Ascending aorta (tissue), 2 donors: ENCODE measurements at regions of chr3 and their contacts with region 1.

Region 1: DNA sequence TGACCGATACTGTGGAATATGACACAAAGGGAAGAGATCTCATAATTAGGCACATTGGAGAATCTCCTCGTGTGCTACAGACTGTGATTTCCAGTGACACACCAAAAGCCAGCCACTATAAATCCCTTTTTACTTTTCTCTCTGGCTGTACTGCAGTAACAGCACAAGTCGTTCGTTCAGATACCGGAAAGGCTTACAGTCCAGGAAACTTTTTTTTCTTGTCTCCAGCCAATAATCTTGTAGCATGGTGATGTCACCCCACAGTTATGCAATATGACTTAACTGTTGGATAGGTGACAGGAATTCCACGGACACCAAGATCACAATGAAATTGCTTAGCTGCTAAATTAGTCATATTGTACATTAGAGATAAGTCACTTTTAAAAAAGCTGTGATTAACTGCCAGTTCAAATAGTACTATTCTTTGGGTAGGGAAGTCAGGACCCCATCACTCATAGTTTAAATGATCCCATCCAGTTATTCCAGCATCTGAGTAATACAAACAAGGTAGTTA is 36.3 kb upstream of the TSC22D2 start:
- DNase-seq: peak in 1 of 2 donors; percentile 89
- H3K4me3 ChIP-seq: peak overlapping the region; percentile 34 to 49
- H3K27ac ChIP-seq: peak overlapping the region; percentile 72 to 83
- H3K4me1 ChIP-seq: peaks cover 0 to 11% of the 10 kb centered on the region in 2 donors
- H3K27me3 ChIP-seq: no peaks in the 10 kb centered on the region
- CTCF ChIP-seq: no peak

Region 2: GRCh38 chr3:150238998-150239619 is 132.7 kb before region 1 on chr3:
- intact Hi-C with region 1: loop called (anchors 5 kb)
- DNase-seq: no peak
- H3K4me3 ChIP-seq: no peak overlapping the region
- H3K27ac ChIP-seq: peak overlapping the region; percentile 87
- H3K4me1 ChIP-seq: peaks cover 2 to 34% of the 10 kb centered on the region in 2 donors
- H3K27me3 ChIP-seq: no peaks in the 10 kb centered on the region
- CTCF ChIP-seq: peak in 1 of 3 experiments; percentile 14

Region 3: GRCh38 chr3:150253622-150254021 is 118.2 kb before region 1 on chr3:
- intact Hi-C with region 1: loop called (anchors 2 kb)
- DNase-seq: peak in 1 of 2 donors; percentile 69
- H3K4me3 ChIP-seq: no peak overlapping the region
- H3K27ac ChIP-seq: peak overlapping the region; percentile 62 to 92
- H3K4me1 ChIP-seq: peaks cover 16 to 40% of the 10 kb centered on the region in 2 donors
- H3K27me3 ChIP-seq: no peaks in the 10 kb centered on the region
- CTCF ChIP-seq: no peak

Region 4: GRCh38 chr3:150348500-150348899 is 23.3 kb before region 1 on chr3:
- intact Hi-C with region 1: loop called (anchors 2 kb)
- DNase-seq: peak in 1 of 2 donors; percentile 84
- H3K4me3 ChIP-seq: no peak overlapping the region
- H3K27ac ChIP-seq: peak overlapping the region; percentile 54 to 55
- H3K4me1 ChIP-seq: peaks cover 0 to 22% of the 10 kb centered on the region in 2 donors
- H3K27me3 ChIP-seq: no peaks in the 10 kb centered on the region
- CTCF ChIP-seq: no peak

Region 5: GRCh38 chr3:150495563-150496168 is 123.9 kb after region 1 on chr3:
- intact Hi-C with region 1: loop called (anchors 5 kb)
- DNase-seq: no peak
- H3K4me3 ChIP-seq: no peak overlapping the region
- H3K27ac ChIP-seq: no peak overlapping the region
- H3K4me1 ChIP-seq: no peaks in the 10 kb centered on the region
- H3K27me3 ChIP-seq: no peaks in the 10 kb centered on the region
- CTCF ChIP-seq: peak; percentile 67 to 78 (median 71)

Region 6: DNA sequence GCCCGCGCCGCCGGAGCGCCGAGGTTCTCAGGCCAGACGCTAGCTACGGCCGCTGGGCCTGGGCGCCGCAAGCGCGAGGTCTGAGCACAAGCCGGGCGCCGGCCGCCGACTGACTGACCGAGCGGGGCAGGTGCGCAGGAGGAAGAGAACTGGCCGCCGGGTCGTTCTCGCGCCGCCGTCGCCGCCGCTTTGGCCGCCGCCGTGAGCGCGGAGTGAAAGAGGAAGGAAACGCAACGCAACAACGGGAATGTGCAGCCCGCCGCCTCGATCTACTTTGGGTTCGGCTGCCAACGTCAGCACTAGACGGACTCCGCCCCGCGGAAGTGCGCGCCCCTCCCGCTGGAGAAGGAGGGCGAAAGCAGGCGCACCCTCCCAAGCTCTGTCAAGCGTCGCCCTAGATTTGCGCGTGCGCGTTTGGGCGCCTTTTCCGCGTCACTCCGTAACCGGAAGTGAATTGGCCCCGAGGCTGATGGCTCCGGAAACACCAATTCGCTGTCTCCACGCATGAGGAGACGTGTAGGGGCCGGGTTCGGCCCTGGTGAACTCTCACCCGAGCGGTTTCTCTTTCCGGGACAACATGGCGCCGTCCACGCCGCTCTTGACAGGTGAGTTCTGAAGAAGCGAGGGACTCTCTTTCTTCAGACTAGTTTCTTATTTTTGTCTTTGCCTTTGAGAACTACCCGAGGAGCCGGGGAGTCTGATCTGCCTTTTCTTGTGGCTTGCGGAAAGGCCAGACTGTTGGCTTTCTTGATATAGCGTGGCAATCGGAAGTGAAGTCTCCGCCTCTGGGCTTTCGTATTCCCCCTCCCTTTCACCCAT is 174.6 kb after region 1 on chr3 and contains the starts of genes EIF2A and SERP1:
- intact Hi-C with region 1: loop called (anchors 2 kb)
- DNase-seq: peak; percentile 94 to 99
- H3K4me3 ChIP-seq: peak within 1 kb of the TSS; percentile 89 to 99
- H3K27ac ChIP-seq: peak within 1 kb of the TSS; percentile 99 to 100
- H3K4me1 ChIP-seq: peaks cover 0 to 24% of the 10 kb centered on the region in 2 donors
- H3K27me3 ChIP-seq: no peaks in the 10 kb centered on the region
- CTCF ChIP-seq: no peak
- total RNA-seq, gene EIF2A: 83.2 TPM
- total RNA-seq, gene SERP1: 237 TPM

Region 7: DNA sequence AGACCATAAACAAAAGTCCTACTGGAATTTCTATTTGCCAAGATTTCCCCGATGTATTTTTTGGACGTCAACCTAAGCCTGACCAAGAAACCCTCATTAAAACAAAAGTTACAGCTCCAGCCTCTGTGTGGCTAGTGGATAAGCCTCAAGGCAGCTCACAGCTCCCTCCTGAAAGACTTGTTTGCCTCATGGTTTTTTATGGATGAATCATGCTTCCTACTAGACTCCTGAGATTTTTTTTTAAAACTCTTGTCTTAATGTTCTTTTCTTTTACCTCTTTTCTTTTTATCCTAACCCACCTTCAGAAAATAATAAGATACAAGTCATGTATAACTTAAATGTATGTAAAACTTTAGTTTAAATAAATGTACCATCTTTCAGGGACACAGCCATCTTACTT is 1554.1 kb after region 1 on chr3:
- intact Hi-C with region 1: no loop called
- DNase-seq: no peak
- H3K4me3 ChIP-seq: no peak overlapping the region
- H3K27ac ChIP-seq: peak overlapping the region in 1 of 2 donors; percentile 43
- H3K4me1 ChIP-seq: peaks cover 0 to 10% of the 10 kb centered on the region in 2 donors
- H3K27me3 ChIP-seq: no peaks in the 10 kb centered on the region
- CTCF ChIP-seq: no peak